ENCODE measurements at regions of chr17 and their contacts with region 1.

Region 1: GRCh38 chr17:1573916-1574696 is 11.5 kb upstream of the PITPNA start:
- DNase-seq: peak; percentile 80

Region 2: DNA sequence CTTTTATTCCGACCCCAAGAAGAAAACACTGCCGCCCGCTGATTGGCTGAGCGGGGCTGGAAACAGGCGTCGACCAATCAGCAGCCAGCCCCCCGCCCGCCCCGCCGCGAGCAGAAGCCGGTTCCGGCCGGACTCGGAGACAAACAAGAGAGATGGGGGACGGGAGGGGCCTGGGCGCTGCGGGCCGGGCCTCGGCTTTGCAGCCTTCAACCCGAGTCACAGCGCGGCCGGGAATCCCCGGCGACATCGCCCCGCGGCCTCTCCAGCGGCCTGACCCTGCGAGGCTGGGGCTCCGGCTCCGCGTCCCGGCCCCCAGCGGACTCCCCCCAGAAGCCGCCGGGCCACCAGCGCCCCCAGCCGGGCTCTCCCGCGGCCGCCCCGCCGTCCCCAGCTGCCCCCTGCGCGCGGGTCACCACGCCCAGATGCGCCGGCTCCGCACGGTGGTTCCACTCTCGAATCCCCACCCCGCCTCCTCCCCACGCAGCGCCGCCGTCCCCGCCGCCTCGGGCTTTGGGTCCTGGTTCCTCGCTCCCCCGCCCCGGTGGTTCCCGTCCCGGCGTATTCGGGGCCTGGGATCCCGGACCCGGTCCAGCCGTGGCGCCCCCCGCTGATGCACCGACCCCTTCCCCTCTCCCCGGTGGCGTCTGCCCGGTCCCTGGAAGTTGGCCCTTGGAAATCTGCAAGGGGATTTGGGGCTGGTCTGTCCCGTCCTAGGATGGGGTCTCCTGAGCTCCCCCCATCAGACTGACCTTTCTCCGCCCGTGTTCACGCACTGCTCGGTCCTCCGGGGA is 54.9 kb after region 1 on chr17:
- in situ Hi-C with region 1: loop called (anchors 10 kb)
- DNase-seq: peak; percentile 98